ENCODE measurements at regions of chr19 and their contacts with region 1.

Region 1: DNA sequence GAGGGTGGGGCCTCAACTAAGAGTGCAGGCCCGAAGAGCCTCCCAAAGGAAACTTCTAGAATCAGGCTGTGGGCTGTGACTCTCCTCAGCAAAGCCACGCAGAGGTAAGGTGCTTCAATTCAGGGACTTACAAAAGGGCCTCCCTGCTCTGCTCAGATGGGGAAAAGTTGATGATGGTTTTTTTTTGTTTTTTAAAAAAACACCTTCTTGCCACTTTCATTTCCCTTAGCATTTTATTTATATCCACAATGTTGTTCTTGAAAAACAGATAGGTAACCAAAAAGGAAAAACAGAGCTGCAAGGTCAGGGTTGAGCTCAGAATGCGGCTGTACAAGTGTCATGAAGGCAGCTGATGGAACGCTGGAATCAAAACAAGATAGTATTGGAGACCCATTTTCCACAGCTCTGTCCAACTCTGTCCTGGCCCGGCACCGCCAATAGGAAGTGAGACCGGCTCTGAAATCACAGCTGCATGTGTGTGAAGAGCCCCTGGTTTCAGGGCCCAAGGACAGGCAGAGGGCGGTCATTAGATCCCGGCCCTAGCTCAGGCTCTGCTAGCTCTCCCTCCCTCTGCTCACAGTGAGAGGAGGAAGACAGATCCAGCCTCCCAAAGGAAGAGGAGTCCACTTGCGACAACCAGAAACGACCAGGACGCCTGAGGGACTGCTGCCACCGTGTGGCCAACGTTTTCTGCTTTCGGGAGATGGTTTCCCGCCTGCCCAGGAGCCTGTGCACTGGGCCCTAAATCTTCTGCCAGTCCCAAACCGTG is 58.3 kb downstream of the KLF2 start:
- DNase-seq: peak; percentile 72
- H3K27ac ChIP-seq: peak overlapping the region; percentile 9; the same call in 1 of the 2 replicates
- CTCF ChIP-seq: peak; percentile 80

Region 2: DNA sequence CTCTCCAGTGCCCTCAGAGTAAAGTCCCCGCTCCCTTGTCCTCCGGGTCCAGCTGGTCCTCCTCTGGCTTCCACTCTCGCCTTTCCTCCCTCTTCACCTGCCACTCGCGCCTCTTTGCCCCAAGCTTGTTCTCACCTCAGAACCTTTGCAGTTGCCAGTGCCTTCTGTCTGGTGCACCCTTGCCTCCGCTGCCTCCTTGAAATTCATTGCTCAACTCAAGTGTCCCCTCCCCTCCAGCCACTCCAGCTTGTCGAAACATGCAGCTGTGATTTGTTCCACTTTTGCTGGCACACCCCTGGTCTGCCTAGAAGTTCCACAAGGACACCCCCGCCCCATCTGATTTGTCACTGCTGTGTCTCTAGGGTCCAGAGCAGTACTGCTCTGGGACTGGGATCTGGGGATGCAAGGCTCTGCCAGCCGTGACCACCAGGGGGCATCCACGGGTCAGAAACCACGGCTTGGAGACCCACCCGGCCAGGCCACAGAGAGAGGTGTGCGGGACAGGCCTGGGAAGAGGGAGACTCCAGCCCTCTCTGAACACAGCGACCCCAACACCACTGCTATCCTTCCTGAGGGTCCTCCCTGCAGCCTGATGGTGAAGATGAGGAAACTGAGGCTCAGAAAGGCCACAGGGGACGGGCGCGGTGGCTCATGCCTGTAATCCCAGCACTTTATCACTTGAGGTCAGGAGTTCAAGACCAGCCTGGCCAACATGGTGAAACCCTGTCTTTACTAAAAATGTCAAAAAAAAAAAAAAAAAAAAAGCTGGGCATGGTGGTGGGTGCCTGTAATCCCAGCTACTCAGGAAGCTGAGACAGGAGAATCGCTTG is 135.4 kb before region 1 on chr19:
- CTCF ChIA-PET with region 1: interaction called, 16 read pairs
- POLR2A ChIA-PET with region 1: no interaction called
- DNase-seq: peak; percentile 89
- H3K27ac ChIP-seq: no peak overlapping the region
- CTCF ChIP-seq: peak; percentile 97